ENCODE measurements at regions of chr2 and their contacts with region 1.

Region 1: DNA sequence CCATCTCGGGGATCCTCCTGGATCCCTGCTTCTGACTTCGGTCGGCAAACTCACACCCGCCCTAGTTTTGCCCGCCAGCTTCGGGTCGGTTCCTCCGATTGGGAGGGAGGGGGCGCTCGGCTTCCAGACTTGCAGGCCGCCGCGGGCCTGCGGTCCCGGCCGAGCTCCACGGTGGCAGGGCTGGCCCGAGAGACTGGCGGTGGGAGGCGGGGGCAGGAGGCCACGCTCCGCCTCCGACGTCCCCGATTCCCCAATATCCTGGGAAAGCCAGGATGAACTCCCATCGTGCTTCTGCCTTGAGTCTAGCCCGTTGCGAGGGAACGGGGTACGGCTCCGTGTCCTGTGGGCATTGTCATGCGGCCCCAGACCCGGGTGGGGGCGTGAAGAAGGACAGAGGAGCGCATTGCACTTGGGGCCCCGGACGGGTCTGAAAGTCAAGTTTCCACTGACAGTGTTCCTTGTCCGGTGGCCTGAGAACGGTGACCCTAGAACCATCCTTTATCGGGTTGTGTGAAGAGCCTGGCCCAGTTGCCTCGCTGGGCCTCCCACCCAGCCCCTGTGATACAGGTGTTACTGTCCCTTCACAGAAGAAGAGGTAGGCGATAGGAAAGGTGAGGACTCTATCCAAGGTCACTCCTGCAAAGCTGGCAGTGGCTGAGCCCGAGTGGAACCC is 2.4 kb upstream of the INHBB start:
- DNase-seq: peak; percentile 88
- H3K4me3 Mint-ChIP-seq: peak overlapping the region; percentile 30
- H3K27ac Mint-ChIP-seq: no peak overlapping the region
- H3K4me1 Mint-ChIP-seq: peaks cover 13% of the 10 kb centered on the region
- H3K27me3 Mint-ChIP-seq: peaks cover 60% of the 10 kb centered on the region

Region 2: GRCh38 chr2:120323214-120323613 is 20.4 kb before region 1 on chr2:
- intact Hi-C with region 1: no loop called
- DNase-seq: no peak
- H3K4me3 Mint-ChIP-seq: no peak overlapping the region
- H3K27ac Mint-ChIP-seq: no peak overlapping the region
- H3K4me1 Mint-ChIP-seq: peaks cover 5% of the 10 kb centered on the region
- H3K27me3 Mint-ChIP-seq: peaks cover 7% of the 10 kb centered on the region

Region 3: DNA sequence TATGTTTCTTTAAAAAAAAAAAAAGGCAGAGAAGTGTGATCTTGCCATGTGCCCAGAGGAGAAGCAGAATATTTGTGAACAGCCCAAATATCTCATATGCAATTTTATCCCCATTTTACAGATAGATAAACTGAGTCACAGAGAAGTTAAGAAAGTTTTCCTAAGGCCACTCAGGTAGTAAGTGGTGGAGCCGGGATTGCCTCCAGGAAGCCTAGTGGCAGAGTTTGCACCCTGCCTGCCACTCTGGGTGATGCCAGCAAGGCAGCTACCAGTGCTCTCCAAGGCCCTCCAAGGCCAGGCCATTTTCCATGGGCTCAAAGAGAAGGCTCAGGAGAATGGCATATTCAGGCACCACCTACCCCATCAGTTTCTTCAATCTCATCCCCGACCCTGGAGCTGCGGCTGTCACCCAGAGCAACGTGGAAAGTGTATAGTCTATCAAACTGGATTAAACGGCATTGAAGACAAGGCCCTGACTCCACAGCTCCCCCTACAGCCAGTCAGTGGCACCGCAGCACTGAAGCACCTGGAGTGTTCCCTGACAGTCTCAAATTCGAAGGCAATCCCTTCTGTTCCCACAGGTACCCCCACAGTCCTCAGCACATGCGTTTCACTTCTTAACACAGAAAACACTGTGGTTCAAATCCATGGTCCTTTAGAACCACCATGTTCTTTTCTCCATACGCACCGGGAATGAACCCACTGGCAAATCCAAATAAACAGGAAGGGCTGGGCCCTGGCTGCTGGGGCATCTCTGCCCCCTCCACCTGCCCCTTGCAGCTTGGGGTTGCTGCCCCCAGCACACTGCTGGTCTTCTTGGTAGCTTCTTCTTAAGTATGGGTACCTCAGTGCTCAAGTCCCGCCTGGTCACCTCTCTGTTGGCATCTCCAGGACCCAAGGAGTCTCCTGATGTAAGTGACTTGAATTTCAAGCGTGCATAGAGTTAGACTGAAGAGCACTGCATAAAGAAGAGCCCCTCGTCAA is 177.7 kb after region 1 on chr2:
- intact Hi-C with region 1: loop called (anchors 1 kb)
- DNase-seq: peak; percentile 81
- H3K4me3 Mint-ChIP-seq: no peak overlapping the region
- H3K27ac Mint-ChIP-seq: no peak overlapping the region
- H3K4me1 Mint-ChIP-seq: no peaks in the 10 kb centered on the region
- H3K27me3 Mint-ChIP-seq: peaks cover 20% of the 10 kb centered on the region

Region 4: GRCh38 chr2:120552800-120553481 is 209.4 kb after region 1 on chr2:
- intact Hi-C with region 1: loop called (anchors 10 kb)
- DNase-seq: peak; percentile 80
- H3K4me3 Mint-ChIP-seq: no peak overlapping the region
- H3K27ac Mint-ChIP-seq: no peak overlapping the region
- H3K4me1 Mint-ChIP-seq: peaks cover 4% of the 10 kb centered on the region
- H3K27me3 Mint-ChIP-seq: peaks cover 12% of the 10 kb centered on the region

Region 5: DNA sequence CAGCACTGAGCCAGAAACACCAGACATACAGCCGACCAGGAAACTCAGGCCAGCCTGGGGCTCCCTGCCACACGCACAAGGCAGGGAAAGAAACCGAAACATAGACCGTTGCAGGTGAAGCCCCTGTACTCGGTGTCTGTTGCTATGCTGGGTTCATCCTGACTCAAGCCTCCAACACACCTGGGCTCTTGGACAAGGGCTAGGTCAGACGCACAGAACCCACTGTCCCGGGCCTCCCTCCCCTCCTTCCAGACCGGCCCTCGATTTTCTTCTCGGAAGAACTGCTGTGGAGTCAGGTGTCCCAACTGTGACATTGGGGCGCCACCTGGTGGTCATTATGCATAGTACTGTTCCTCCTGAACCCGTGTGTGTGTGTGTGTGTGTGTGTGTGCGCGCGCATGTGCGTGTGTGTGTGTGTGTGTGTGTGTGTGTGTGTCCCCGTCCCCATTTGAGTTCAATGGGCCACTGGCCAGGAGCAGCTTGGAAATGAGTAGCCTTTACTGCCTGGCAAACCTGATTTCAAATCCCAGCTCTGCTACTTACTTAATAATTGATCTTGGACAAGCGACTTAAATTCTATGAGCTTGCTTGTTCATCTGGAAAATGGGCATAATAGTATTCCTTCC is 336.7 kb after region 1 on chr2:
- intact Hi-C with region 1: loop called (anchors 1 kb)
- DNase-seq: peak; percentile 90
- H3K4me3 Mint-ChIP-seq: no peak overlapping the region
- H3K27ac Mint-ChIP-seq: no peak overlapping the region
- H3K4me1 Mint-ChIP-seq: peaks cover 4% of the 10 kb centered on the region
- H3K27me3 Mint-ChIP-seq: peaks cover 23% of the 10 kb centered on the region

Measured in activated CD4-positive, alpha-beta T cell treated with anti-CD3 and anti-CD28 coated beads, Interleukin-2, amount 10 ng/mL, durations not matched to agents 24 days and 14 days (primary cell).